Activated CD4-positive, alpha-beta T cell treated with anti-CD3 and anti-CD28 coated beads for 36 hours (primary cell): ENCODE measurements at regions of chr5 and their contacts with region 1.

Region 1: GRCh38 chr5:172274921-172275753 is 8.4 kb downstream of the UBTD2 start:
- DNase-seq: peak; percentile 77
- ATAC-seq: peak; percentile 92
- H3K4me3 Mint-ChIP-seq: no peak overlapping the region
- H3K27ac Mint-ChIP-seq: peak overlapping the region; percentile 40
- H3K4me1 Mint-ChIP-seq: peaks cover 43% of the 10 kb centered on the region
- H3K27me3 Mint-ChIP-seq: no peaks in the 10 kb centered on the region

Region 2: GRCh38 chr5:172229904-172230303 is 45.2 kb before region 1 on chr5:
- CTCF ChIA-PET with region 1: no interaction called
- POLR2A ChIA-PET with region 1: no interaction called
- intact Hi-C with region 1: loop called in 1 of 2 experiments (anchors 1 kb)
- DNase-seq: no peak
- ATAC-seq: peak; percentile 78
- H3K4me3 Mint-ChIP-seq: no peak overlapping the region
- H3K27ac Mint-ChIP-seq: peak overlapping the region; percentile 3
- H3K4me1 Mint-ChIP-seq: peaks cover 27% of the 10 kb centered on the region
- H3K27me3 Mint-ChIP-seq: peaks cover 1% of the 10 kb centered on the region

Region 3: DNA sequence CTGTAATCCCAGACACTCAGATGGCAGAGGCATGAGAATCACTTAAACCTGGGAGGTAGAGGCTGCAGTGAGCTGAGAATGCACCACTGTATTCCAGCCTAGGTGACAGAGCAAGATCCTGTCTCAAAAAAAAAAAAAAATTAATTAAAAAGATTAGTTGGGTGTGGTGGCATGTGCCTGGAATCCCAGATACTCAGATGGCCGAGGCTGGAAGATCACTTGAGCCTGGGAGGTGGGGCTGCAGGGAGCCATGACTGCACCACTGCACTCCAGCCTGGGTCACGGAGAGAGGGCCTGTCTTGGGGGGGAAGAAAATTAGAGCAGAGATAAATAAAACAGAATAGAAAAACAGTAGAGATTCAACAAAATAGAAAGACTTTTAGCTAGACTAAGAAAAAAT is 26.5 kb before region 1 on chr5:
- CTCF ChIA-PET with region 1: no interaction called
- POLR2A ChIA-PET with region 1: no interaction called
- intact Hi-C with region 1: no loop called
- DNase-seq: no peak
- ATAC-seq: no peak
- H3K4me3 Mint-ChIP-seq: no peak overlapping the region
- H3K27ac Mint-ChIP-seq: no peak overlapping the region
- H3K4me1 Mint-ChIP-seq: peaks cover 9% of the 10 kb centered on the region
- H3K27me3 Mint-ChIP-seq: no peaks in the 10 kb centered on the region